ENCODE measurements at regions of chr17 and their contacts with region 1.

Region 1: DNA sequence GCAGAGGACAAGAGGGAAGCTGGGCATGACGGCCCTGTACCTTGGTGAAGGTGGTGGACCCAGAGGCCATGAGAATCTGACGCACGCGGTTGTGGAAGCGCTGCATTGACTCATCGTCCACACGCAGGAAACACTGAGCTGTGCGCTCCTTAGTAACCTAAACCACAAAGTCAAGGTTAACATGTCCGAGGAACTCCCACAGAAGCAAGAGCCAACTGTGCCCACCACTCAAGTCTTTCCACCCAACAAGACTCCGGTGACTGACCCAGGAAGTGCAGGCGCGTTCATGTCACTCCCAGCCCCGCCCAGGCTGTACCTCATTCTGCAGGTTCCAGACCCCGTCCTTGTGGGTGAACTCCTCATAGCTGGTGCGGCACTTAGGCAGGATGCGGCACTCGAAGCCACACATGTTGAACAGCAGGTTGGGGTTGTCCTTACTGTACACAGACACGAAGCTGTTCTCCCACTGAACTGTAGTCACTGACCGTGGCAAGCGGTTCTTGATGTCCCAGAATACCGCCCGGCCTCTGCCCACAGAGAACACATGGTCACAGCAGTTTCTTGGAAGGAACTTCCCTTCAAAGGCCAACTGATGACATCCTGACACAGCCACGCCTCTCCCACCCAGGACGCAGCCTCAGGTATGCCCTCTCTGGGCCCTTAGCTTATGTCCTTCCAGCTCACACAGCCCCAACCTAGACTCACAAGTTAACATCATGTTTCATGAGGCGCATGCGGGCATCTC is 11.5 kb downstream of the PRPF8 start:
- DNase-seq: no peak

Region 2: GRCh38 chr17:1628856-1629646 is 44.2 kb before region 1 on chr17:
- intact Hi-C with region 1: no loop called
- DNase-seq: peak; percentile 98

Region 3: GRCh38 chr17:1709971-1710806 is 37.0 kb after region 1 on chr17 and contains the start of gene TLCD2:
- intact Hi-C with region 1: loop called in 1 of 2 experiments (anchors 5 kb)
- DNase-seq: peak; percentile 93
- total RNA-seq, gene TLCD2: 7.6 to 8.2 TPM

Measured in posterior vena cava (tissue), 2 donors.